ENCODE measurements at regions of chr17 and their contacts with region 1.

Region 1: DNA sequence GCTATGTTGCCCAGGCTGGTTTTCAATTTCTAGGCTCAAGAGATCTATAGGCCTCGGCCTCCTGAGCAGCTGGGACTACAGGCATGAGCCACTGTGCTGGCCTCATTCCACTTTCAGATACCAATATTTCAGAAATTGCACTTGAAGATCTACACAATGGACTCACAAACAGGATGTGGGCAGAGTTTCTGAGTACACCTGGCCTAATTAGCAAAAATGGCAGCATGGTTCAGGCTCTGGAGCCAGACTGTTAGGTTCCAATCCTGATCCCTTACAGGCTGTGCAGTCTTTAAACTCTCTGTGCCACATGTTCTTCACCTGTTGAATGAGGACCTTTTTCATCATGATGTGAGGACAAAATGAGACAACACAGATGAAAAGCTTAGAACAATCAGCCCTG is 32.2 kb downstream of the RNF157 start:
- DNase-seq: peak; percentile 66
- ATAC-seq: peak; percentile 95
- H3K4me3 ChIP-seq: no peak overlapping the region
- H3K27ac ChIP-seq: peak overlapping the region; percentile 51
- H3K4me1 ChIP-seq: peaks cover 17% of the 10 kb centered on the region
- H3K27me3 ChIP-seq: no peaks in the 10 kb centered on the region
- CTCF ChIP-seq: no peak
- EP300 ChIP-seq: no peak
- POLR2A ChIP-seq: no peak
- RAD21 ChIP-seq: no peak

Region 2: GRCh38 chr17:76219670-76220383 is 11.7 kb after region 1 on chr17:
- CTCF ChIA-PET with region 1: interaction called, 5 read pairs
- POLR2A ChIA-PET with region 1: interaction called, 8 read pairs
- RAD21 ChIA-PET with region 1: no interaction called
- SMC1A ChIA-PET with region 1: interaction called, 23 read pairs
- in situ Hi-C with region 1: no loop called
- intact Hi-C with region 1: no loop called
- DNase-seq: no peak
- ATAC-seq: no peak
- H3K4me3 ChIP-seq: no peak overlapping the region
- H3K27ac ChIP-seq: no peak overlapping the region
- H3K4me1 ChIP-seq: no peaks in the 10 kb centered on the region
- H3K27me3 ChIP-seq: no peaks in the 10 kb centered on the region
- CTCF ChIP-seq: no peak
- EP300 ChIP-seq: no peak
- POLR2A ChIP-seq: no peak
- RAD21 ChIP-seq: no peak

Region 3: GRCh38 chr17:76696763-76697701 is 488.9 kb after region 1 on chr17:
- CTCF ChIA-PET with region 1: no interaction called
- POLR2A ChIA-PET with region 1: no interaction called
- RAD21 ChIA-PET with region 1: no interaction called
- SMC1A ChIA-PET with region 1: no interaction called
- in situ Hi-C with region 1: no loop called
- intact Hi-C with region 1: no loop called
- DNase-seq: peak; percentile 40
- ATAC-seq: peak; percentile 92
- H3K4me3 ChIP-seq: no peak overlapping the region
- H3K27ac ChIP-seq: no peak overlapping the region
- H3K4me1 ChIP-seq: peaks cover 22% of the 10 kb centered on the region
- H3K27me3 ChIP-seq: no peaks in the 10 kb centered on the region; a peak in 1 of 4 replicates
- CTCF ChIP-seq: no peak
- EP300 ChIP-seq: no peak
- POLR2A ChIP-seq: no peak
- RAD21 ChIP-seq: no peak